Naive thymus-derived CD4-positive, alpha-beta T cell (primary cell): ENCODE measurements at regions of chr7 and their contacts with region 1.

Region 1: DNA sequence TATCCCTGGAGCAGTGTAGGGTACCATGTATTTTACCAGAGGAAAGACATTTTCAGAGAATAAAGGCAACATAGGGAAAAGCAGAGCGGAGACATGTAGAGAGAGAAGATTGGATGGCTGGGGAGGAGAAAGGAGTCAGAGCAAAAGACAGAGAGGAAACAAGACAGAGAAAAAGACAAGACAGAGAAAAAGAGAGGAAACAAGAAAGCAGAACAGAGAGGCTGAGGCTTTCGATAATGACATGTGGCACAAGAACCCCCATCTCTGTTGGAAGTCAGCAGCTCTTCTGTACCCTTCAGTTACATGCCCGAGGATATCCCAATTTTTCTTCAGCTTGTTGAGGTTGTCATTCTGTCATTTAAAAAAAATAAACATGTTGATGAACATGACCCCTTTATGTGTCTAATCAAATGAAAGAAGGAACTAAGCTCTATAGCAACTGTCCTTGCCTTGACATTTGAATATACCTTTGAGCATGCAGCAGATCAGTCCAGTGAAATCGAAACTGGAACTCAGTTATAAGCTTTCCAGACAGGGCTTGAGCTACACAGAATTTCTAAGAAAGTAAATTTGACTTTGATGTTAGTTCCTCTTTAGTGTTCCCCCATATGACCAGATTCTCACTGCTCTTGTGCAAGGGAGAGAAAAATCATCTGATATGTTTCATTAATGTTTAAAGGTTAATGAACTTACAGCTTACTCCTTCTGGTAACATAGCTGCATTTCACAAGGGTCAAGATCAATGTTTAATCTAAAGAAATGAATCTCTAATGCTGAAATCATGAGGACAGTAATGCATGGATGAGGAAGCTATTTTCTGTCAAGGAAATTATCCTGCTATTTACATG is 75.1 kb upstream of the SP4 start:
- DNase-seq: peak in 7 of 9 donors; percentile 25 to 60 (median 47)
- ATAC-seq: peak; percentile 80
- H3K4me3 ChIP-seq: peak overlapping the region; percentile 22
- H3K4me3 Mint-ChIP-seq: peak overlapping the region; percentile 51 to 86 (median 76)
- H3K27ac ChIP-seq: peak overlapping the region; percentile 43
- H3K27ac Mint-ChIP-seq: peak overlapping the region; percentile 76 to 95 (median 89)
- H3K4me1 ChIP-seq: peaks cover 41 to 56% of the 10 kb centered on the region in 2 donors
- H3K4me1 Mint-ChIP-seq: peaks cover 39 to 68% (median 54%) of the 10 kb centered on the region in 7 donors
- H3K27me3 ChIP-seq: no peaks in the 10 kb centered on the region
- H3K27me3 Mint-ChIP-seq: no peaks in the 10 kb centered on the region

Region 2: DNA sequence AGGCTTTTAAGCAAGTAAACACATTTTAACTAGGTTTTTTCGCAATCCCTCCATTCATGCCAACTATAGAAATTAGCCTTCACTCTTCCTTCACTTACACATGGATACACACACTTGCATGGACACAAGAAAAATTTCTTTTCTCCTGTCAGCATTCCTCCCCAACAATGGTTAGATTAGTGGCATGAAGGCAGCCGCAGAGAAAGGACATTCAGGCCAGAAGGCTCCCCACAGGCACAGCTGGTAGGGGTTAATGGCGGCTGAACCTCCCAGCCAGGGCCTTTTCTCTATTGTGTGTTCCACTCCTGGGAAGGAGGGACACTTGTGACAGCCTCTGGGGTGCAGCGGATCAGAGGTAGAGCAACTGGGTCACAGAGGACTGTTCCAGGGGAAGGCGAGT is 311.1 kb before region 1 on chr7:
- CTCF ChIA-PET with region 1: no interaction called
- POLR2A ChIA-PET with region 1: no interaction called
- intact Hi-C with region 1: no loop called
- DNase-seq: no peak
- ATAC-seq: no peak
- H3K4me3 ChIP-seq: no peak overlapping the region
- H3K4me3 Mint-ChIP-seq: no peak overlapping the region
- H3K27ac ChIP-seq: no peak overlapping the region
- H3K27ac Mint-ChIP-seq: no peak overlapping the region
- H3K4me1 ChIP-seq: no peaks in the 10 kb centered on the region
- H3K4me1 Mint-ChIP-seq: no peaks in the 10 kb centered on the region
- H3K27me3 ChIP-seq: no peaks in the 10 kb centered on the region
- H3K27me3 Mint-ChIP-seq: peaks cover 0 to 16% (median 13%) of the 10 kb centered on the region in 5 donors

Region 3: DNA sequence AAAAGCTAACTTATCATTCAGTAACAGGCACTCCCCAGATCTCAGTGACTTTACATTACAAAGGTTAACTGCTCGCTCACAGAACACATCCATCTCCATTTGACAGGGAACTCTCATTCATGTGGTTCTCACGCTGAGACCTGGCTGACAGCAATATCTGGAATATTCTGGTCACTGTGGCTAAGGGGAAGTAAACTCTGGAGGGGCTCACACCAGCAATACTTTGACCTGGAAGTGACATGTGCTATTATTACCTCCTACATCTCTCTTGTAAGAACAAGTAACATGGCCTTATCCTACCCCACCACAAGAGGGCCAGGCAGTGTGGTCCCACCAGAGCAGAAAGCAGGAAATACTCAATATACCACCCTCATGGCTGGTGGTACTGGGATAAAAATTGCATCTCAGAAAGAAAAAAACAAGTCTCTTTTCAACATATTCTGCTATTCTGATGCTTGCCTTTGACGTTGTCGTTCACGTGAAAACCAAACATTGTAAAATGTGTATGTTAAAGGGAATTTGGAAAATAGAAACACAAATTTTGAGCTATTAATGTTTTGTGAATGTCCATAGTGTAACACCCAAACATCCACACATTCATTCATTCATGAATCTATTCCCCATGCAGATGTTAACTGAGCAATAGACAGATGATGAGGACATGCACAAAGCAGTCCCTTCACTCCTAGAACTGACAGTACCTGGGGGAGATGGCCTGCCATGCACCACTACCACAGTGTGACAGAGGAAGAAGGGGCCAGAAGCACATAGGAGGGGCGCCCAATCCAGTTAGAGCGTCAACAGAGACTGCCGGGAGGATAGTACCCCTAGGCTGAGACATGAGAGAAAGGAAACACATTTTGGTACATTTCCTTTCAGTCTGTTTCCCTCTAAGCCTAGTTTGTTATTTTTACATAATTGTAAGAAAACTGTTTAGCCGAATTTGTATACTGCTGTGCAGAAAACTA is 90.9 kb before region 1 on chr7:
- CTCF ChIA-PET with region 1: interaction called, 3 read pairs
- POLR2A ChIA-PET with region 1: no interaction called
- intact Hi-C with region 1: loop called in 1 of 2 experiments (anchors 2 kb)
- DNase-seq: peak in 7 of 9 donors; percentile 20 to 45 (median 27)
- ATAC-seq: peak; percentile 74
- H3K4me3 ChIP-seq: no peak overlapping the region
- H3K4me3 Mint-ChIP-seq: peak overlapping the region in 1 of 10 donors; percentile 49
- H3K27ac ChIP-seq: no peak overlapping the region
- H3K27ac Mint-ChIP-seq: peak overlapping the region in 2 of 9 donors; percentile 60 to 63
- H3K4me1 ChIP-seq: peaks cover 0 to 2% of the 10 kb centered on the region in 2 donors
- H3K4me1 Mint-ChIP-seq: peaks cover 0 to 21% (median 9%) of the 10 kb centered on the region in 7 donors
- H3K27me3 ChIP-seq: no peaks in the 10 kb centered on the region
- H3K27me3 Mint-ChIP-seq: peaks cover 3 to 10% (median 6%) of the 10 kb centered on the region in 5 donors

Region 4: DNA sequence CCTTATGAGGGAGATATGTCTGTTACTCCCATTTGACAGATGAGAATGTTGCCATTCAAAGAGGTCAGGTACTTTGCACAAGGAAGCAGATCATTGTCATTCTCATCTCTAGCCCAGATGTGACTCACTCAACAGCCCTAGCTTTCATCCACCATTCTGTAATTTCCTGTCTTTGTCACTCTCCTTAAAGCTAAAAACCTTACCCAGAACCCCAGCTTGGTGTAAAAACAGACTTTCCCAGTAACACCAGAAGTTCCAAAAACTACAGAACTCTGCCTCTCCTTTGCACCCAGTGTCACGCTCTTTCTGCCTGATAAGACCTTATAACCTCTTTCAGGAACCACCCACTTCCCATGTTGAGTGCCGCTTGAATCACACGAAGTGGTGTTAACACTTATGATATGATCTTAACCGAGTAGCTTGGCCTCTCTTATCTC is 14.0 kb before region 1 on chr7:
- CTCF ChIA-PET with region 1: interaction called, 4 read pairs
- POLR2A ChIA-PET with region 1: no interaction called
- intact Hi-C with region 1: loop called (anchors 1 to 2 kb)
- DNase-seq: peak in 5 of 9 donors; percentile 4 to 58 (median 10)
- ATAC-seq: peak; percentile 95
- H3K4me3 ChIP-seq: peak overlapping the region; percentile 33
- H3K4me3 Mint-ChIP-seq: peak overlapping the region; percentile 9 to 72 (median 50)
- H3K27ac ChIP-seq: peak overlapping the region; percentile 32
- H3K27ac Mint-ChIP-seq: peak overlapping the region; percentile 30 to 95 (median 75)
- H3K4me1 ChIP-seq: peaks cover 7 to 15% of the 10 kb centered on the region in 2 donors
- H3K4me1 Mint-ChIP-seq: peaks cover 7 to 70% (median 13%) of the 10 kb centered on the region in 7 donors
- H3K27me3 ChIP-seq: no peaks in the 10 kb centered on the region
- H3K27me3 Mint-ChIP-seq: no peaks in the 10 kb centered on the region

Region 5: DNA sequence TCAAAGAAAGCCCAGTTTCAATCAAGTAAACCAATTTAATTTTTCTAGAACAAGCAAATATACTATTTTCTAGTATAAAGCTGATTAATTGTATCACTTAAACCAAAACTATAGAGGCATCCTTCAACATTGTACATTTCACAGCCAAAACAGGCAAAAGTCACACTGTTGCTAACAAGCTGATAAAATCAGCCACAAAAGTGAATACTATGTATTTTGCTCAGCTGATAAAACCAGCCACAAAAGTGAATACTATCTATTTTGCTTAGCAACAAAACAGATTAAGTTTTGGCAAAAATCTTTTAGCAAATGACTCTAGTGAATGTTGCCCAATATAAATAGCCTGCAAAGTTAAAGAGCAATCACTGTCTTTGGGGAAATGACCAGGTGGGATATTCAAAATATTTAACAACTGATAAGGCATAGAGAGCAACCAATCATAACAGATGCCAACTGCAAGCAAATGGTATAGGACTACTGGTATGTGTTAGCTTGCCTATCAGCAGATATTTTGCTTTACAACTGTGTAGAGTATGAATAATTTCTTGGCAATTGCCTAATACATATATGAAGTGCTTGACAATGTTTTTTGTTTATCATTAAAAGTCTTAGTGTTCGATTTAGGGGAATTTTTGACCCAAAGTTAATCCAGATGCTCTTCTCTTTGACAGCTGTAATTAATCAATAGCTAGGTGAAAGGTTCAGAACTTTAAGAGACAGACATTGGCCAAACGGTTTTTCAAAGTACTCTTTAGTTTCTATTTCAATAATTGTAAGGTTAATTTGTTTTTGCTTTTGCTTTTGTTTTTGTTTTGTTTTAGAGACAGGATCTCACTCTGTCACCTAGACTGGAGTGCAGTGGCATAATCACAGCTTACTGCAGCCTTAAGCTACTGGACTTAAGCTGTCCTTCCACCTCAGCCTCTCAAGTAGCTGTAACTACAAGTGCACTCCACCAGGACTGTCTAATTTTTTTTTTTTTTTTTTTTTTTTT is 30.8 kb after region 1 on chr7:
- CTCF ChIA-PET with region 1: no interaction called
- POLR2A ChIA-PET with region 1: no interaction called
- intact Hi-C with region 1: loop called in 1 of 2 experiments (anchors 1 kb)
- DNase-seq: no peak
- ATAC-seq: peak; percentile 69
- H3K4me3 ChIP-seq: no peak overlapping the region
- H3K4me3 Mint-ChIP-seq: peak overlapping the region in 2 of 10 donors; percentile 59 to 63
- H3K27ac ChIP-seq: no peak overlapping the region
- H3K27ac Mint-ChIP-seq: peak overlapping the region in 2 of 9 donors; percentile 12 to 87
- H3K4me1 ChIP-seq: peaks cover 0 to 13% of the 10 kb centered on the region in 2 donors
- H3K4me1 Mint-ChIP-seq: peaks cover 0 to 37% (median 6%) of the 10 kb centered on the region in 7 donors
- H3K27me3 ChIP-seq: no peaks in the 10 kb centered on the region
- H3K27me3 Mint-ChIP-seq: no peaks in the 10 kb centered on the region

Region 6: GRCh38 chr7:21945454-21946227 is 592.9 kb after region 1 on chr7 and contains the start of gene CDCA7L:
- CTCF ChIA-PET with region 1: no interaction called
- POLR2A ChIA-PET with region 1: no interaction called
- intact Hi-C with region 1: loop called in 1 of 2 experiments (anchors 2 kb)
- DNase-seq: peak; percentile 40 to 77 (median 66)
- ATAC-seq: peak; percentile 85
- H3K4me3 ChIP-seq: peak within 1 kb of the TSS; percentile 57
- H3K4me3 Mint-ChIP-seq: peak within 1 kb of the TSS; percentile 86 to 95 (median 92)
- H3K27ac ChIP-seq: peak within 1 kb of the TSS; percentile 56
- H3K27ac Mint-ChIP-seq: peak within 1 kb of the TSS; percentile 60 to 87 (median 75)
- H3K4me1 ChIP-seq: peaks cover 0 to 33% of the 10 kb centered on the region in 2 donors
- H3K4me1 Mint-ChIP-seq: peaks cover 29 to 80% (median 62%) of the 10 kb centered on the region in 7 donors
- H3K27me3 ChIP-seq: no peaks in the 10 kb centered on the region
- H3K27me3 Mint-ChIP-seq: peaks cover 0 to 20% (median 0%) of the 10 kb centered on the region in 5 donors
- total RNA-seq, gene CDCA7L: 24.3 to 47.0 (median 41.0) TPM